Psoas muscle (tissue), 8 donors: ENCODE measurements at regions of chr4 and their contacts with region 1.

Region 1: DNA sequence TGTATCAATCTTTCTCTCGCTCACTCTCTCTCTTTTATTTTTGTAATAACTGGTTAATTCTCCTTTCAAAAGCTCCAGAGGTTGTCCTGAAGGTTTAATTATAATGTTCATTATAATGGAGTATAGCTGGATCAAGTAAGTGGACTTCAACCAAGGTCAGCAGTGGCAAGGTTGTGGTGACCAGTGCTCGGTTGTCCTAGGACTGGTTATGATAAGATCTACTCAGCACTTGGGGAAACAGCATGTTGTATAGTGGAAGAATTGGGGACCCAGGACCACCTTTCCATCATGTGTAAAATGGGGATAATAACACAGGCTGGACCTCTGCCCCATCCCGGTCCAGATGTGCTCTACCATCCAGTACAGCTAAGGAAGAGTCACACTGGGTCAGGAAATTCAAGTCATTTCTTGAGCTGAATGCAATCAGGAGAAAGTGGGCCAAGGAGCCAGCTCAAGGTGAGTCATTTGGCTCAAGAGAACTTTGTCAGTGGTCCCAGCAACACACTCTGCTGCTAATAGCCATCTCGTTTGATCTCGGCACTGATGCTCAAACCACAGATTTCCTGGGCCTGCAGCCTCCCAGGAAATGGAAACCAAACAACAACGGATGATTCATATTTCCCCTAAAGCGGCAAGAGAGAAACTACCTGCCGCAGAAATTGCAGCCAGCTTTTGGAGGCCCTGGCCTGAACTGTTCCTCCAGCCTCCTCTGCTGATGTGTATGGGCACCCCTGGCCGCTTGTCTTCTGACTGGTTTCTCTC is 123.6 kb upstream of the RBPJ start:
- DNase-seq: peak in 1 of 2 donors; percentile 21
- ATAC-seq: peak in 1 of 4 donors; percentile 54
- H3K4me3 ChIP-seq: no peak overlapping the region
- H3K27ac ChIP-seq: no peak overlapping the region
- H3K4me1 ChIP-seq: no peaks in the 10 kb centered on the region
- H3K27me3 ChIP-seq: no peaks in the 10 kb centered on the region
- CTCF ChIP-seq: no peak

Region 2: GRCh38 chr4:26434030-26434639 is 236.9 kb after region 1 on chr4:
- intact Hi-C with region 1: no loop called
- DNase-seq: no peak
- ATAC-seq: no peak
- H3K4me3 ChIP-seq: no peak overlapping the region
- H3K27ac ChIP-seq: no peak overlapping the region
- H3K4me1 ChIP-seq: no peaks in the 10 kb centered on the region
- H3K27me3 ChIP-seq: no peaks in the 10 kb centered on the region
- CTCF ChIP-seq: no peak

Region 3: DNA sequence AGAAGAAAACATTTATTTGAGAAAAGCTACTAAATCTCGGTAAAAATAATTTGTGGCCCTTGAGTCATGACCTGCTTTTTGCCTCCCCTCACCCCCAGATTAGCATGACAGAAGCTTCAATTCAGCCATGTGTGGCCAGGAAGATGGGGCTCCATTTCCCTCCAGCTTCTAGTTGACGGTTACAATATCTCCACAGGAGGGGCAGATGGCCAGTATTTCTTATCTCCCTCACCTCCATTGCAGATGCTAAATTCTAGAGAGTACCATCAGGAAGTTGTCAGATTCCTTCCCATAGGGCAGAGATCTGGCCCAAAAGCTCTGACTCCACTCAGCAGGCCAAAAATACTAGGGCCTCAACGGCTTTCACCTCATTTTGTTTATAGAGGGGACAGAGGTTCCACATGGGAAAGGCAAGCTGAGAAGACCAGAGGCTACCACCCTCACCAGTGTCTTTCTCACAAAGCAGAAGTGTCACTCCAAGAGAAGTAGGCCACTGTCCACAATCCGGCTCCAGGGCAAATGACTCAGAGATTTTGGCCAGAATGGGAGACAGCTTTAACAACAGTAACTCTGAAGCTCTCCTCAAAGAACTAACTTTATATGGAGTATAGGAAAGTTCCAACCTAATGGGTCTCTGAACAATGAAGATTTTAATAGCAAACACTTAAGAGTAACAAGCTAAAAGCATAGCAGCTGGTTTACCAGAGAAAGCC is 495.0 kb after region 1 on chr4:
- intact Hi-C with region 1: loop called in 1 of 2 experiments (anchors 5 kb)
- DNase-seq: no peak
- ATAC-seq: no peak
- H3K4me3 ChIP-seq: no peak overlapping the region
- H3K27ac ChIP-seq: no peak overlapping the region
- H3K4me1 ChIP-seq: no peaks in the 10 kb centered on the region
- H3K27me3 ChIP-seq: no peaks in the 10 kb centered on the region
- CTCF ChIP-seq: no peak